Heart right ventricle (tissue), 16 donors: ENCODE measurements at regions of chr9 and their contacts with region 1.

Region 1: GRCh38 chr9:88578121-88579054 is 43.4 kb downstream of the NXNL2 start:
- DNase-seq: peak; percentile 75 to 84
- ATAC-seq: peak; percentile 82 to 93 (median 88)
- H3K4me3 ChIP-seq: peak overlapping the region in 2 of 10 donors; percentile 7 to 19
- H3K27ac ChIP-seq: no peak overlapping the region
- H3K4me1 ChIP-seq: peaks cover 0 to 8% (median 0%) of the 10 kb centered on the region in 9 donors
- H3K27me3 ChIP-seq: peaks cover 0 to 9% (median 0%) of the 10 kb centered on the region in 7 donors
- CTCF ChIP-seq: peak in 8 of 9 donors; percentile 92 to 99 (median 97)

Region 2: DNA sequence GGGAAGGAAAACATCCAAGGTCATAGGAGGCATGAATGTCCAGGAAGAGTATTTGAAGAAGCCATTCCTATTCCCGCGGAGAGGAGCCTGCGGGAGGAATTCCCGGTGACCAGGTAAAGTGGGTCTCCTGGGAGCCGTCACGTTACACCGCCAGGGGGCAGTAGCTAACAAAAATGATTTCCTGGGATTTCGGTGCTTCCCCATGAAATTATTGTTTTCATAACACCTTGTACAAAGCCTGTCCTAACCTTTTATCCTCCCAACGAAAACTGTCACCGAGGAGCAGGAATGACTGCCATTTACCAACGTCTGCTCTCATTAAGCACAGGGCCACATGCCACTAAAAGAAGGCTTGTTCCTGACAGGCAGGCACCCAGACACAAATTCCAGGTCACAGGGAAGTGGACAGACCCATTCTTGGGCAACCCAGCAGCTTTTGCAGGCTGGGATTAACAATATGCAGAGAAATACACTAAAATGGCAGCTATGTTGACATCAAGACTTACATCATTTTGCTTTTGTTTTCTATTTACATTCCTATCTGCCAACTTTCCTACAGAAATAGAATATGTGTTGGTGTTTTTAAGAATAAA is 893.7 kb before region 1 on chr9:
- intact Hi-C with region 1: loop called in 3 of 10 experiments (anchors 10 kb)
- DNase-seq: peak in 1 of 2 donors; percentile 24
- ATAC-seq: peak in 6 of 8 donors; percentile 9 to 76 (median 41)
- H3K4me3 ChIP-seq: no peak overlapping the region
- H3K27ac ChIP-seq: peak overlapping the region in 1 of 10 donors; percentile 79
- H3K4me1 ChIP-seq: peaks cover 0 to 27% (median 0%) of the 10 kb centered on the region in 9 donors
- H3K27me3 ChIP-seq: no peaks in the 10 kb centered on the region
- CTCF ChIP-seq: peak; percentile 57 to 83 (median 73)

Region 3: GRCh38 chr9:87959916-87960581 is 618.3 kb before region 1 on chr9:
- intact Hi-C with region 1: loop called in 4 of 10 experiments (anchors 10 kb)
- DNase-seq: no peak
- ATAC-seq: no peak
- H3K4me3 ChIP-seq: no peak overlapping the region
- H3K27ac ChIP-seq: no peak overlapping the region
- H3K4me1 ChIP-seq: no peaks in the 10 kb centered on the region
- H3K27me3 ChIP-seq: peaks cover 0 to 6% (median 0%) of the 10 kb centered on the region in 7 donors
- CTCF ChIP-seq: no peak

Region 4: DNA sequence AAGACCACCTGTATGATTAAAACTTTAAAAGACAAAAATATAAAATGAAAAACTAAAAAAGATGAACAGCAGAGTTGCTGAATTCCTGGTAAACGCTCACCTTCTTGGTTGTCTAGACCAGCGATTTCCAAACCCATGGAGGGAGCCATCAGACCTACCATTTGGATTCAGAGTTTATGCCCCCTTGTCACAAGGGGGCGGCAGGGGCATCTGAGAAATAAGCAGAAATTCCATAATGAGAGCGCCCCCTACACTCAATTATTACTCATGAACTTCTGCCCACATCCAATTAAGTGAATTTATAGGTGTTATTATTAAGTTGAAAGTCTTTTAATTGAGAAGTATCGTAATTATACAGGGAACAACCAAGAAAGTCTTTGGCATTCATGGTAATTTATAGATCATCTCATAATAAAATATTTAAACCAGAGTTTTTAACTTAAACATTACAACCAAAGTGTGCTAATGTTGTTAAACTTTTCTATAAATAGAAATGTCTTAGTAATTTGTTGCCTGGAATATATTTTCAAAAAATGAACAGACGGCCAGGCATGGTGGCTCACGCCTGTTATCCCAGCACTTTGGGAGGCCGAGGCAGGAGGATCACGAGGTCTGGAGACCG is 404.9 kb before region 1 on chr9:
- intact Hi-C with region 1: loop called in 7 of 10 experiments (anchors 5 kb)
- DNase-seq: peak; percentile 27 to 46
- ATAC-seq: peak in 5 of 8 donors; percentile 28 to 77 (median 45)
- H3K4me3 ChIP-seq: no peak overlapping the region
- H3K27ac ChIP-seq: no peak overlapping the region
- H3K4me1 ChIP-seq: no peaks in the 10 kb centered on the region
- H3K27me3 ChIP-seq: no peaks in the 10 kb centered on the region
- CTCF ChIP-seq: peak in 8 of 9 donors; percentile 49 to 88 (median 70)

Region 5: GRCh38 chr9:88388172-88388885 is 190.1 kb before region 1 on chr9 and contains the start of gene SPIN1:
- intact Hi-C with region 1: loop called in 3 of 10 experiments (anchors 5 to 10 kb)
- DNase-seq: peak; percentile 79 to 87
- ATAC-seq: peak; percentile 73 to 93 (median 88)
- H3K4me3 ChIP-seq: peak within 1 kb of the TSS; percentile 63 to 97 (median 90)
- H3K27ac ChIP-seq: peak within 1 kb of the TSS; percentile 85 to 95 (median 92)
- H3K4me1 ChIP-seq: peaks cover 2 to 48% (median 17%) of the 10 kb centered on the region in 9 donors
- H3K27me3 ChIP-seq: no peaks in the 10 kb centered on the region
- CTCF ChIP-seq: peak in 5 of 9 donors; percentile 28 to 81 (median 67)
- total RNA-seq, gene SPIN1: 40.6 to 65.0 (median 51.7) TPM

Region 6: DNA sequence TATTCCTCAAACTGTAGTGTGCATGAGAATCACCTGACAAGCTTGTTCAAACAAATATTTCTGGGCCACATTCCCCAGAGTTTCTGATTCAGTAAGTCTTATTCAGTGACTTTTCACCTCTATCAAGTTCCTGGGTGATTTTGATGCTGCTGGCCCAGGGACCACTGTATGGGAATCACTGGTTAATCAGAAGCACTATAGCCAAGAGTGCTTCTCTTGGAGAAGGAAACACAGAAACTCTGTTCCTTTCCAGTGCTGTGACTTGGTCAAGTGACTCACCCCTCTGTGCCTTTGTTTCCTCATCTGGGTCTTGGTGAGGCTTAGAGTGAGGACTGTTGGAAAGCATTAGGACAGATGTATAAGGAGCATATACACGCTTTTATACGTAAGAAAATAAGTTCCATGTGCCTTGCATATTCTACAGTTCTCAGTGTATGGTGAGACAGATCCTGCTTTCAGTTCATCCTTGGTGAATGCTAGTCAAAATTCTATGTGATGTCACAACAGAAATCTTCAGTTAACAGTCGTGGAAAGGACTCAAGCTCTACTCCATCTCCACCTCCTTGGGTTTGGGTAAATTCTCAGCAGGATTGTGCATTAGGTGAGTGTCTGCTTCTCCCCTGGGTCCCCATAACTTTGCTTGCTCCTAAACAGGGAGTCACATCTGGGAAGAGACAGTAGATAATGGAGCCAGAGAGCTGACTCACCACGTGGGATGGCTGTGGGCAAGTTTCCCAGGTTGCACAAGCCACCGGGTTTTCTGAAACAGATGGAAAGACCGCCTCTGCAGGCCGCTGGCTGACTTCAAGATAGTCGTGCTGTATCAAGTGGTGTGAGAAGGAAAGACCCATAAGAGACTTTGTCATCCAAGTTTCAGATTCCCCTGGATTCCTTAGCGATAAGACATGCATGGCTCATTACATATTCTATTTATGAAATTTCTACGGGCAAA is 73.6 kb after region 1 on chr9:
- intact Hi-C with region 1: no loop called
- DNase-seq: peak; percentile 78 to 85
- ATAC-seq: peak; percentile 85 to 96 (median 92)
- H3K4me3 ChIP-seq: no peak overlapping the region
- H3K27ac ChIP-seq: peak overlapping the region in 5 of 10 donors; percentile 49 to 80 (median 55)
- H3K4me1 ChIP-seq: peaks cover 0 to 25% (median 4%) of the 10 kb centered on the region in 9 donors
- H3K27me3 ChIP-seq: no peaks in the 10 kb centered on the region
- CTCF ChIP-seq: peak in 4 of 9 donors; percentile 15 to 38 (median 32)

Region 7: DNA sequence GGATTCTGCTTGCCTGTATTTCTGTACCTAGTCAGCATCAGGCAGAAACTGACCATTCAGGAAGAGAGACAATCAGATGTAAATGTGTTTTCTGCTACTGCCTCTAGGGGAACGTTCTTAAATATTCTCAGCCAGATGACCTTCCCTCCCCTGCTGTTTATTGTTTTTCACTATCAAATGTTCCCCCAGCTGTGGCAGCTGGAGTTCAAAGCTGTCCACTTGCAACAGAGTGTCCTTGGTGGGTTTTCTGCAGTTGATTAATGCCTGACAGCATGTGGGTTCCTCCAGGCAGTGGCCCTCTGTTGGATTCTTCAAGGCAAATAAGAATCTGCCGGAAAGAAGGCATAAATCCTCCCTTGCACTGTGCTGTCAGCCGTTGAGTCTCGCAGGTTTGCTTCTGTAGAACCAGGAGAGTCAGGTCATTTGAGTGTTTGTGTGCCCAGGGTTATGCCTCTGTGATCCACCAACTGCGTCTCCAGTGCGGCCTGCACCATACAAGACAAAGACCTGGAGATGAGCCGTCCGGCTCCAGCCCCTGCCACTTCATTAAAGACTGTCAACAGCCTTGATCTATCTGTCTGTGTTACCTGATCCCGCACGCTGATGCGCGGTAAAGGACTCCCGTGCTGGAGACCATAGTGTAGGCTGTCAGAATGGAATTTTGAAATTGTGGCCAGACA is 1229.8 kb after region 1 on chr9:
- intact Hi-C with region 1: no loop called
- DNase-seq: no peak
- ATAC-seq: no peak
- H3K4me3 ChIP-seq: no peak overlapping the region
- H3K27ac ChIP-seq: no peak overlapping the region
- H3K4me1 ChIP-seq: peaks cover 4 to 28% (median 14%) of the 10 kb centered on the region in 9 donors
- H3K27me3 ChIP-seq: peaks cover 0 to 5% (median 0%) of the 10 kb centered on the region in 7 donors
- CTCF ChIP-seq: peak in 1 of 9 donors; percentile 21